Aorta (tissue), 5 donors: ENCODE measurements at regions of chr5 and their contacts with region 1.

Region 1: GRCh38 chr5:83281658-83282057 is 189.9 kb upstream of the VCAN start:
- DNase-seq: no peak
- ATAC-seq: no peak
- H3K4me3 ChIP-seq: no peak overlapping the region
- H3K27ac ChIP-seq: no peak overlapping the region
- H3K4me1 ChIP-seq: no peaks in the 10 kb centered on the region
- H3K27me3 ChIP-seq: no peaks in the 10 kb centered on the region

Region 2: DNA sequence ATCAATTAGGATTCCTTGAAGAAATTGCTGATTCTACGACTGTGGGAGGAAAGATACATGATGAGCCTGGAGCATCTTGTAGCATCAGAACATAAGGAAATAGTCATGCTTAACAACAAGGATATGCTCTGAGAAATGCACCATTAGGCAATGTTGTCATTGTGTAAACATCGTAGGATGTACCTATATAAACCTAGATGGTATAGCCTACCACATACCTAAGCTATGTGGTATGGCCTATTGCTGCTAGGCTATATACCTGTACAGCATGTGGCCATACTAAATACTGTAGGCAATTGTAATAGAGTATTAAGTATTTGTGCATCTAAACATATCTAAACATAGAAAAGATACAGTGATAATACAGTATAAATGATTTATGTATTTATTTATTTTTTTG is 112.6 kb after region 1 on chr5:
- intact Hi-C with region 1: loop called in 1 of 2 experiments (anchors 5 kb)
- DNase-seq: no peak
- ATAC-seq: no peak
- H3K4me3 ChIP-seq: no peak overlapping the region
- H3K27ac ChIP-seq: no peak overlapping the region
- H3K4me1 ChIP-seq: no peaks in the 10 kb centered on the region
- H3K27me3 ChIP-seq: no peaks in the 10 kb centered on the region